Activated CD4-positive, alpha-beta T cell treated with anti-CD3 and anti-CD28 coated beads, Interleukin-2, amount 10 ng/mL, durations not matched to agents 24 days and 14 days (primary cell): ENCODE measurements at regions of chr10 and their contacts with region 1.

Region 1: DNA sequence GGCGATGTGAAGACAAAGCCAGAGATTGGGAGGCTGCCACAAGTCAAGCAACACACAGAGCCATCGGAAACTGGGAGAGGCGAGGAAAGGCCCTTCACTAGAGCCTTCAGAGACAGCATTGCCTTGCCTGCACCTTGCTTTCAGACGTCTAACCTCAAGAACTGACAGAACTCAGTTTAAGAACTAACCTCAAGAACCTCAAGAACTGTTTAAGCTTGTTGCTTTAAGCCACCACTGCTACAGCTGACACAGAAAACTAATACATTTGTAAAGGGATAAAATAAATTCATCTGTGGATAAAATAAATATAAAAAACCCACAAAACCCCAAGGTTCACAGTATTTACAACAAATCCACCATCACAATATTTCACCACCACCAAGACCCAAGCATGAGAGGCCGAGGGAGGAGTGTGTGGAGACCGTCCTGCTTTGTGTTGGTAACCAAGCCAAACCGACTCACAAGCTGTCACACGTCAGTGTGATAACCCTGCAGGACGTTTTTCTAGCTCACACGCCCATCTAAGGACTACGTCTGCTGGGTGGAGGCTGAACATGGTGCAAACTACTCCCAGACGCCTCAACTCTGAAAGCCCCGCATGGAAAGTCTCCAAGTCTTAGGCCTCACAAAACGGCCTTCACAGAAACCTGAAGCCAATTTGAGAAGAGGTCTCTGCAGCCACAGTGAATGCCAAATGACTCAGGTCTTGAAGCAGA is 116.8 kb downstream of the ABLIM1 start:
- DNase-seq: peak; percentile 94
- H3K4me3 Mint-ChIP-seq: peak overlapping the region; percentile 32
- H3K27ac Mint-ChIP-seq: peak overlapping the region; percentile 90
- H3K4me1 Mint-ChIP-seq: peaks cover 78% of the 10 kb centered on the region
- H3K27me3 Mint-ChIP-seq: no peaks in the 10 kb centered on the region

Region 2: DNA sequence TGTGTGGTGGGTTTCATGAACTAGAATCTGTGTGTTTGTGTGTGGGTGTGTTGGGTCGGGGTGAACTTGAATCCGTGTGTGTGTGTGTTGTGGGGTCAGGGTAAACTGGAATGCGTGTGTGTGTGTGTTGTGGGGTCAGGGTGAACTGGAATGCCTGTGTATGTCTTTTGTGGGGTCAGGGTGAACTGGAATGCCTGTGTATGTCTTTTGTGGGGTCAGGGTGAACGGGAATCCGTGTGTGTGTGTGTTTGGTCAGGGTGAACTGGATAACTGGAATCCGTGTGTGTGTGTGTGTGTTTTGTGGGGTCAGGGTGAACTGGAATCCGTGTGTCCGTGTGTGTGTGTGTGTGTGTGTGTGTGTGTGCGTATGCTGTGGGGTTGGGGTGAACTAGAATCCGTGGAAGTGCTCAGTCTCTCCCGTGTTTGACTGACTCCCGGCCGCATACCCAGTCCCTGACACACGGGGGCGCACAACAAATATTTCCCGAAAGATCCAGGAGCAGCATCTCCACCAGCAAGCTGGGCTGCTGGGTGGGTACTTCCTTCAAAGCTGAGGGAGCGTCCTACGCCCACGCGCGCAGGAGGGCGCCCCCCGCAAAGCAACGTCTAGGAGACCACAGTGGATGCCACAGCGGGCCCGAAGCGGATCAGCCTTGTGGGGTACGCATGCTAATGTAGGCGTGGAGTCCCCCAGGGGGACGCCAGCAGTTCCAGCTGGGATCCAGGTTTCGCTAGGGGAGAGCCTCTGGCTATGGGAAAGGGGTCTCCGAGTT is 862.4 kb before region 1 on chr10:
- intact Hi-C with region 1: loop called (anchors 5 kb)
- DNase-seq: peak; percentile 92
- H3K4me3 Mint-ChIP-seq: peak overlapping the region; percentile 89
- H3K27ac Mint-ChIP-seq: peak overlapping the region; percentile 89
- H3K4me1 Mint-ChIP-seq: peaks cover 37% of the 10 kb centered on the region
- H3K27me3 Mint-ChIP-seq: peaks cover 9% of the 10 kb centered on the region

Region 3: DNA sequence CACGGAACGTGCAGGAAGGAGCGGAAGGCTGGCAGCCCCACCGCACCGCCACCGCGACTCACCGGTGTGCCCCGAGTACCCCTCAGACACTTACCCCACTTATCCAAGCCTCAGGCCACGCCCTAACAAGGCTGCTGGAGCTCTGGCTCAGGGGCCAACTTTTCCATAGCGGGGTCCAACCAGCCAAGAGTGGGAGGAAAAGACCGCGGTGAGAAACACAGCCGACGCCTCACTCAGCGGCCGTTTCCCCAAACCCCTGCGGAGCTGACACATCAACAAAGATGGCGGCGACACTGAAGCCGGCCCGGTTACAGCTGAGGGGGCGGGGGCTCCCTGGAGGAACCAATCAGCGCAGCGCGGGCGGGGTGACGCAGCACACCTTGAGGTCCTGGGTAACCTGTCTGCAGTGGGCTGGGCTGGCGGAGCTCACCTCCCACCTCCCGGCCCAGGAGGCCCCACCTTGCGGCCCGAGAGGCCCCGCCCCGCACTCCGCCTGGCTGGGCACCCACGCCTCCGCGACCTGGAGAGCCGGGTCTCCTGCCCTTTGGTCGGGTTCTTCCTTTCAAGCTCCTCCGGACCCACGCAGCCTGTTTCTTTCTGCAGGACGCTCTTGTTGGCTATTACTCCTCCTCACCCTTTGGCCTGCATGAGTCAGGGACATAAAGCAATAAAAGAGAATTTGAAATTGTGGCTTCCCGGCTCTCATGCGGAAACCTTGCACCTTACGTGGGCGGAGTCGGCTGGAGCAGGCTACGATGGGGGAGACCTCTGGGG is 367.1 kb before region 1 on chr10 and contains the start of gene CCDC186:
- intact Hi-C with region 1: loop called (anchors 2 kb)
- DNase-seq: peak; percentile 99
- H3K4me3 Mint-ChIP-seq: peak within 1 kb of the TSS; percentile 100
- H3K27ac Mint-ChIP-seq: peak within 1 kb of the TSS; percentile 97
- H3K4me1 Mint-ChIP-seq: peaks cover 22% of the 10 kb centered on the region
- H3K27me3 Mint-ChIP-seq: peaks cover 23% of the 10 kb centered on the region
- total RNA-seq, gene CCDC186: 9.0 and 9.4 TPM in 2 replicates

Region 4: GRCh38 chr10:114492351-114493037 is 48.7 kb before region 1 on chr10:
- intact Hi-C with region 1: loop called (anchors 1 kb)
- DNase-seq: peak; percentile 80
- H3K4me3 Mint-ChIP-seq: peak overlapping the region; percentile 40
- H3K27ac Mint-ChIP-seq: peak overlapping the region; percentile 49
- H3K4me1 Mint-ChIP-seq: peaks cover 45% of the 10 kb centered on the region
- H3K27me3 Mint-ChIP-seq: no peaks in the 10 kb centered on the region

Region 5: DNA sequence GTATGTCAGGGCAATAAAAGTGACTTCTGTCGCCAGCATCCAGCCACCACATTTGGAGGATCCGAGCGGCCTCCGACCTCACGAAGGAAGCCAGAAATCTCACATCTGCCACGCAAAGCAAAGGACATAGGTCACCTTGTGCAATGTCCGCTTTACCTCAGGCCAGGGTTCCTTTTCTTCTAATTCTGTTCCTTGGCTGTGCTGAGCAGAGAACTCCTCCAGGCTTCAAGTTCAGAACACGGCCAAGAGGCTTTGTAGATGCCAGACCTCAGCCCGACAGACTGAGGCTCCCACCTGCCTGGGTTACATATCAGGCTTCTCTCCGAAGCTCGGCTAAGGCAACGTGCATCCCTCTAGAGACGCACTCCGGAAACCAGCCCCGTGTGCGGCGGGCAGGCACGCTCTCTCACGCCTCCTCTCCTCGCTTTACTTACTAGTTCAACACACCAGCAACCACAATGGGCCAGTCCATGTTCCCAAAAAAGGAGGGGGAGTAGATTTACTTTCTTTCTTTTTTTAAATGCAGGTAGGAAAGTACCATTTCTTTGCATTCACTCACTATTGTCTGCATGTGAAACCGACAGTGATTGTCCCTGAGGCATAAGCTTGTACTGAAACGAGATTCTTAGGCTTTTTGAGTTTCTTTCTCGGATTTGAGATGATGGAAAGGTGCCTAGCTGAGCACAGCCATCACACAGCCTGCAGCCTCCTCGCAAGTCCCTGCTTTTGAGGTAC is 14.6 kb before region 1 on chr10:
- intact Hi-C with region 1: loop called (anchors 1 kb)
- DNase-seq: peak; percentile 97
- H3K4me3 Mint-ChIP-seq: peak overlapping the region; percentile 78
- H3K27ac Mint-ChIP-seq: peak overlapping the region; percentile 97
- H3K4me1 Mint-ChIP-seq: peaks cover 53% of the 10 kb centered on the region
- H3K27me3 Mint-ChIP-seq: no peaks in the 10 kb centered on the region

Region 6: DNA sequence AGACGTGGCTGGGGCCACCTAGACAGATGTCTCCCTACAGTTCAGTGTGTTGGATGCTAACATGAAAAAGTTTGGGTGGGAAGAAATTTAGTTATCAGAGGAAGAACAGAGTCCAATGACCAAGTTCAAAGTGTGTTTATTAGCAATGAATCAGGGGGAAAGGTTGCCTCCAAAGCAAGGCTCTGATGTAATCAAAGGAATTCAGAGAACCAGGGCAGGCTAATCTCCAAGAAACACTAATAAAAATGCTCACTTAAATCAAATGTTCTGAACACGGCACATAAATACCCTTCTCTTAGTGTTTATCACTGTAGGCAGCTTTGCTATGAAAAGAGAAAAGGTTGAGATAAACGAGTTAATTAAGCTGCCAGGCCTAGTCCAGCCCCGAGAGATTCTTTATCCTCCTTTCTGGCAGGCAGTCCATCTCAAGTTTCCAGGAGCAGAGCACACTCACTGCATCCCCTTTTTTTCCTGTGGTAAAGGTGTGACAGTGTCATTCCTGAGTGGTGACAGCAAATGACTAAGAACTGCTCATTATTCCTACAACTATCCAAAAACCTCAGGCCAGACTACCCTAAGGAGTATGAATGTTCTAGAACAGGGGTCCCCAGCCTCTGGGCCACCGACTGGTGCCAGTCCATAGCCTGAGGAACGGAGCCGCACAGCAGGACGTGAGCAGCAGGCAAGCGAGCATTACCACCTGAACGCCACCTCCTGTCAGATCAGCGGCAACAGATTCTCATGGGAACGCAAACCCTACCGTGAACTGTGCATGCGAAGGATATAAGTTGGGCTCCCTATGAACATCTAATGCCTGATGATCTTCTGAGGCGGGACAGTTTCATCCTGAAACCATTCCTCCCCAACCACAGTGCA is 213.4 kb after region 1 on chr10:
- intact Hi-C with region 1: no loop called
- DNase-seq: no peak
- H3K4me3 Mint-ChIP-seq: no peak overlapping the region
- H3K27ac Mint-ChIP-seq: no peak overlapping the region
- H3K4me1 Mint-ChIP-seq: no peaks in the 10 kb centered on the region
- H3K27me3 Mint-ChIP-seq: peaks cover 20% of the 10 kb centered on the region

Region 7: GRCh38 chr10:114821293-114821914 is 280.2 kb after region 1 on chr10 and contains the start of gene FHIP2A:
- intact Hi-C with region 1: loop called (anchors 1 kb)
- DNase-seq: peak; percentile 97
- H3K4me3 Mint-ChIP-seq: peak within 1 kb of the TSS; percentile 91
- H3K27ac Mint-ChIP-seq: peak within 1 kb of the TSS; percentile 96
- H3K4me1 Mint-ChIP-seq: peaks cover 31% of the 10 kb centered on the region
- H3K27me3 Mint-ChIP-seq: peaks cover 21% of the 10 kb centered on the region
- total RNA-seq, gene FHIP2A: 24.2 and 24.7 TPM in 2 replicates